Pancreas (tissue), 10 donors: ENCODE measurements at regions of chr18 and their contacts with region 1.

Region 1: GRCh38 chr18:45384137-45384961 is 230.9 kb upstream of the SLC14A2 start:
- DNase-seq: peak in 5 of 6 donors; percentile 35 to 67 (median 49)
- ATAC-seq: peak; percentile 77 to 93 (median 92)
- H3K4me3 ChIP-seq: no peak overlapping the region
- H3K27ac ChIP-seq: no peak overlapping the region
- H3K4me1 ChIP-seq: peaks cover 0 to 8% (median 7%) of the 10 kb centered on the region in 3 donors
- H3K27me3 ChIP-seq: no peaks in the 10 kb centered on the region
- CTCF ChIP-seq: peak; percentile 52 to 66 (median 58)

Region 2: GRCh38 chr18:43620936-43621335 is 1763.4 kb before region 1 on chr18:
- intact Hi-C with region 1: loop called in 1 of 3 experiments (anchors 10 kb)
- DNase-seq: no peak
- ATAC-seq: peak in 3 of 4 donors; percentile 77 to 78 (median 77)
- H3K4me3 ChIP-seq: no peak overlapping the region
- H3K27ac ChIP-seq: no peak overlapping the region
- H3K4me1 ChIP-seq: no peaks in the 10 kb centered on the region
- H3K27me3 ChIP-seq: no peaks in the 10 kb centered on the region
- CTCF ChIP-seq: peak; percentile 8 to 42 (median 30)

Region 3: GRCh38 chr18:45275367-45276113 is 108.8 kb before region 1 on chr18:
- intact Hi-C with region 1: loop called in 1 of 3 experiments (anchors 10 kb)
- DNase-seq: no peak
- ATAC-seq: peak in 1 of 4 donors; percentile 42
- H3K4me3 ChIP-seq: no peak overlapping the region
- H3K27ac ChIP-seq: no peak overlapping the region
- H3K4me1 ChIP-seq: peaks cover 0 to 8% (median 0%) of the 10 kb centered on the region in 3 donors
- H3K27me3 ChIP-seq: no peaks in the 10 kb centered on the region
- CTCF ChIP-seq: peak; percentile 64 to 81 (median 73)